ENCODE measurements at regions of chr17 and their contacts with region 1.

Region 1: GRCh38 chr17:76397687-76398487 is 13.5 kb downstream of the SPHK1 start:
- DNase-seq: peak; percentile 91
- H3K4me3 Mint-ChIP-seq: no peak overlapping the region
- H3K27ac Mint-ChIP-seq: no peak overlapping the region
- H3K4me1 Mint-ChIP-seq: no peaks in the 10 kb centered on the region
- H3K27me3 Mint-ChIP-seq: no peaks in the 10 kb centered on the region

Region 2: GRCh38 chr17:76353599-76354316 is 44.1 kb before region 1 on chr17 and contains the start of gene PRPSAP1:
- CTCF ChIA-PET with region 1: interaction called, 18 read pairs
- POLR2A ChIA-PET with region 1: no interaction called
- DNase-seq: peak; percentile 85
- H3K4me3 Mint-ChIP-seq: peak within 1 kb of the TSS; percentile 83
- H3K27ac Mint-ChIP-seq: peak within 1 kb of the TSS; percentile 98
- H3K4me1 Mint-ChIP-seq: peaks cover 29% of the 10 kb centered on the region
- H3K27me3 Mint-ChIP-seq: no peaks in the 10 kb centered on the region
- total RNA-seq, gene PRPSAP1: 58.7 to 63.0 TPM

Region 3: GRCh38 chr17:76384222-76384986 is 13.5 kb before region 1 on chr17 and contains the start of gene SPHK1:
- CTCF ChIA-PET with region 1: interaction called, 59 read pairs
- POLR2A ChIA-PET with region 1: no interaction called
- DNase-seq: peak; percentile 66
- H3K4me3 Mint-ChIP-seq: peak within 1 kb of the TSS; percentile 79
- H3K27ac Mint-ChIP-seq: peak within 1 kb of the TSS; percentile 86
- H3K4me1 Mint-ChIP-seq: peaks cover 18% of the 10 kb centered on the region
- H3K27me3 Mint-ChIP-seq: peaks cover 2% of the 10 kb centered on the region
- total RNA-seq, gene SPHK1: 1.4 to 1.6 TPM

Region 4: GRCh38 chr17:76501018-76501826 is 103.3 kb after region 1 on chr17 and contains the start of gene RHBDF2:
- CTCF ChIA-PET with region 1: interaction called, 13 read pairs
- POLR2A ChIA-PET with region 1: no interaction called
- DNase-seq: peak; percentile 93
- H3K4me3 Mint-ChIP-seq: peak within 1 kb of the TSS; percentile 85
- H3K27ac Mint-ChIP-seq: peak within 1 kb of the TSS; percentile 97
- H3K4me1 Mint-ChIP-seq: peaks cover 57% of the 10 kb centered on the region
- H3K27me3 Mint-ChIP-seq: no peaks in the 10 kb centered on the region
- total RNA-seq, gene RHBDF2: 37.1 to 41.6 TPM

Region 5: DNA sequence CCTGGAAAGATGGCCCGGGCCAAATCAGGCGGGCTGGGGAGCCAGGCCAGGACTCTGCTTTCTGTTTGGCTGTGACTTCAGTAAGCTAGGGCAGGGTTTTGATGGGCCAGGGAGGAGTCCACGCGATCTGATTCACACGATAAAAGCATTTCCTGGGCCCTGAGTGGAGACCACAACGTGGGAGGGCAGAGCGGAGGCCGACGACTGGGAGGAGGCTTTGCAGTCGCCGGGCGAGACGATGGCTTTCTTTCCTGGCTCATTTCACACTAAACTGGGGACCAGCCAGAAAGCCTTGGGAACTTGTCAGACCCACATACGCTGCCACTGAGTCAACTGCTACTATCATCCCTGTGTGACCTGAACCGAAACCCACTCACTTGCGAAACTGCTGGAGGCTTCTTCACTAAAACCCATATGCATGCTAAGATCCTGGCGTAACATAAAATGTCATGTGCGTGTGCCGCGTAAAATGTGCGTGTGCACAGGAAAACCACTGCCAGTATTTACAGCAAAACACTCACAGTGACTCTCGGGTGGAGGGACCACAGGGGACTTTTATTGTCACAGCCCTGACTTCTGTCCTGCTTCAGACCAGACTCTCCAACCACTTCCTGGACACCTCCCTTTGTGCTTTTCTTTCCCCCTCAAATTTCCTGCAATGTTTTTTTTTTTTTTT is 117.5 kb after region 1 on chr17:
- CTCF ChIA-PET with region 1: no interaction called
- POLR2A ChIA-PET with region 1: no interaction called
- DNase-seq: peak; percentile 88
- H3K4me3 Mint-ChIP-seq: peak overlapping the region; percentile 44
- H3K27ac Mint-ChIP-seq: peak overlapping the region; percentile 96
- H3K4me1 Mint-ChIP-seq: peaks cover 75% of the 10 kb centered on the region
- H3K27me3 Mint-ChIP-seq: no peaks in the 10 kb centered on the region

Measured in activated CD4-positive, alpha-beta T cell treated with anti-CD3 and anti-CD28 coated beads, Interleukin-2, amount 10 ng/mL, durations not matched to agents 7 days and 5 days (primary cell).